PC-9 (cell line): ENCODE measurements at regions of chr17 and their contacts with region 1.

Region 1: DNA sequence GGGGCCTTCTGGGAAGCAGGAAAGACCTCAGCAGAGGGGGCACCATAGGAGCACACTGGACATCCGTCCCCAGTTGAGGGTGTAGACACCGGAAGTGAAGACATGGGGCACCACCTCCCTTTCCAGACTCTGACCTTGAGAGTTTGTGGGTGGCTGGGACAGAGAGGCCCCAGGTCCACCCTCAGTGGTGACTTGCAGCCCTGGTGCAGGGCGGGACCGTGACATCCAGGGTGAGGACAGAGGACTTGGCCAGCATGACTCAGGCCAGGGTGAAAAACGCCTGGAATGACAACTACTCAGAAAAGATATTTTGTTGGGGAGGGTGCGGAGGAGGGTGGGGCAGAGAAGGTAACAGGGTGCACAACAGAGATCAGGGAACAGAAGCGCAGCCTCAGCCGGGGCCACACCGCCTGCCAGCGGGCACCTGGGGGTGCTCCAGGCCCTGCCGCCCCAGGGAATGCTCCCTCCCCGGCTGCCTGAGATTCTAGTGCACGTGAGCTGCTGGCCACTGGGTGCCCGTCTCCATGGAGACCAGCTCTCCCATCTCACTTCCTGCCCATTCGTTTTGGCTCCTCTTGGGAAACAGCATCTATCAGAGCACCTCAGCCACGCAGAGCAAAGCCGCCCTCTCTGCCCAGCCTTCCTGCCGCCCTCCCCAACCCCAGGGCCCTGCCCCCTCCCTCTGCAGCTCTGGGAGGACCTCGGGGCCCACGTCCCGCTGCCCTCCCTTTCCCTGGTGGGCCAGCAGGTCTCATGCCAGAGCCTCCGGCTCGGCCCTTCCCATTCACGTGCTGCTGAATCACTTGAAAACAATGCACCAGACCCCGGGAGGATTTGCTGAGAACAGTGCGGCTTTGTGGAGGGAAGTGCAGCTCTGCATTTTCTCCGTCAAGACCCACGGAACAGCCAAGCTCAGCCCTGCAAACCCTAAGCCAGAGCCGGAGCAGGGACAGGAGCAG is 19.6 kb downstream of the CEP295NL start:
- DNase-seq: peak; percentile 90 to 94
- H3K4me3 ChIP-seq: peak overlapping the region; percentile 39; the same call in 1 of the 2 replicates
- H3K27ac ChIP-seq: peak overlapping the region; percentile 93
- H3K4me1 ChIP-seq: peaks cover 48% of the 10 kb centered on the region
- H3K27me3 ChIP-seq: no peaks in the 10 kb centered on the region
- CTCF ChIP-seq: no peak

Region 2: DNA sequence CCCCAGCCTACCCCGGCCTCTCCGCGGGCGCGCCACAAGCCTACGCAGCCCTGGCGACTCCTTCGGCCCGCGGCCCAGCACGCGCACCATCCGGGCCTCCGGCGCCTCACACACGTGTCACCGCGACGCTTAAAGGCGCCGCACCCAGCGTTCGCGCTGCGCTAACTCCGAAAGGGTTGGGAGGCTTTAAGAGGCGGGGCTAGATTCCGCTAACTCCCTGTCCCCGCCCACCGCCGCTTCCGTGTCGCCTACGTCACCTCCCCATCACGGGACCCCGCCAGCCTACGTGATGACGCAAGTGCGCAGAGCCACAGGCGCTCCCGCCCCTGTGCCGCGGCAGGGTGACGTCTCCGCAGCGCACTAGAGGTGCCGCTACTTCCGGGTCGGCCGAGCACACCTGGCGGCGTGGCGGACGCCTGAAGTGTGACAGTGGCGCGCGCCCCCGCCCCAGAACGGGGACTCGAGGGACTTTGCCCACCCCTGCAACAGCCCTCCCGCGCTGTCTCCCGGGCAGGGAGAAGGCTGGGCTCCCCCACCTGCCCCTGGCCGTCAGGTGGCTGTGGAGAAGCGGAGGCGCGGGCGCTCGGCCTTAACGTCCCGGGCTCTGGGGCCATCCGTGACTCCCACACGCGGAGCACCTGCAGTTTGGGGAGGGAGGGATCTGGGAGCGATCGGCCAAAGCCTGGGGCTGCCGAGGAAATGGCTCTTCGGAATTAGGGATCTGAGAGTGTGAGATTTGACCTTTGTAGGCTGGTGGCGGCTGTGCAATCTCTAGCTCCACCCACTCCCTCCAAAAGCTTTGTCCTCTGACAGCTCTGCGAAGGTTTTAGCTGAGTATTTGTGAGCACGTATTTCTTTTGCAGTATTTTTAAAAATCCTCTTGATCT is 42.5 kb before region 1 on chr17 and contains the start of gene USP36:
- CTCF ChIA-PET with region 1: no interaction called
- POLR2A ChIA-PET with region 1: no interaction called
- intact Hi-C with region 1: loop called (anchors 1 kb)
- DNase-seq: peak; percentile 89 to 99
- H3K4me3 ChIP-seq: peak within 1 kb of the TSS; percentile 95
- H3K27ac ChIP-seq: peak within 1 kb of the TSS; percentile 85
- H3K4me1 ChIP-seq: peaks cover 13% of the 10 kb centered on the region
- H3K27me3 ChIP-seq: no peaks in the 10 kb centered on the region
- CTCF ChIP-seq: no peak
- total RNA-seq, gene USP36: 41.4 and 46.2 TPM in 2 replicates

Region 3: GRCh38 chr17:78915872-78916632 is 32.6 kb after region 1 on chr17:
- CTCF ChIA-PET with region 1: no interaction called
- POLR2A ChIA-PET with region 1: no interaction called
- intact Hi-C with region 1: loop called (anchors 1 kb)
- DNase-seq: peak; percentile 62 to 75
- H3K4me3 ChIP-seq: no peak overlapping the region
- H3K27ac ChIP-seq: no peak overlapping the region
- H3K4me1 ChIP-seq: peaks cover 13% of the 10 kb centered on the region
- H3K27me3 ChIP-seq: no peaks in the 10 kb centered on the region
- CTCF ChIP-seq: no peak

Region 4: DNA sequence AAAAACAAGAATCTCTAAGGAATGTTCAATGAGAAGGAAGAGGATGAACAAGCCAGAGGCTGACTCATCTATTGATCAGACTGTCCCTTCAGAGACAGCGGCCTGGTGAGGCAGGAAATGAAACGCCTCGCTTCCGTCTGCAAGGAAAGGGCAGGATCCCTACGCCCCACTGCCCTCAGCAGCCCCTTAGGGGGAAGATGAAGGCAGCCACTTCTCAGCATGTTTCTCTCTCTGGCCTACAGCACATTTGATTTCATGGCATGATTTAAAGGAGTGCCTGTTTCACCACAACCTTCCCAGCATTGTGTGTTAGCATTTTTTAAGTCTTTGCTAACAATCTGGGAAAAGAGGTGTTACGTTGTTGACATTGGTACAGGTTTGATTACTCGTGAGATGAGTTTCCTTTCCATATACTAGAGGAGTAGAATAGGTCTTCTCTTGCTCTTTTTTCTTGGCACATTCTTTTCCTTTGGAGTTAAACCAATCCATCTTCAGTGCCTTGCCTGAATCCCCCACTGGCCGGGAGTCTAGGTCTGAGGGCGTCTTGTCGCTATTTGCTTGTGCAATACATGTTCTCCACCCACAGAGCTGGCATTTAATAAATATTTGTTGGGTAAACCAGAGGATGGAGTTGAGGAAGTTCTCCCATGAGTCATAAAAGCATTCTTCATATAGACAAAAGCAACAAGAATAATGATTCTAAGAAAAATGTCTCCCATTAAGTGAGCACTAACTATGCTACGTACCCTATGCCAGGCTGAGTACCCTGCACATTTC is 680.0 kb after region 1 on chr17:
- CTCF ChIA-PET with region 1: no interaction called
- POLR2A ChIA-PET with region 1: no interaction called
- intact Hi-C with region 1: no loop called
- DNase-seq: no peak
- H3K4me3 ChIP-seq: no peak overlapping the region
- H3K27ac ChIP-seq: no peak overlapping the region
- H3K4me1 ChIP-seq: no peaks in the 10 kb centered on the region
- H3K27me3 ChIP-seq: peaks cover 71% of the 10 kb centered on the region
- CTCF ChIP-seq: no peak